Right ventricle myocardium inferior (tissue), 1 donor: ENCODE measurements at regions of chr7 and their contacts with region 1.

Region 1: GRCh38 chr7:30983042-30983913 is 19.5 kb downstream of the GHRHR start:
- DNase-seq: peak; percentile 91
- ATAC-seq: peak; percentile 80

Region 2: DNA sequence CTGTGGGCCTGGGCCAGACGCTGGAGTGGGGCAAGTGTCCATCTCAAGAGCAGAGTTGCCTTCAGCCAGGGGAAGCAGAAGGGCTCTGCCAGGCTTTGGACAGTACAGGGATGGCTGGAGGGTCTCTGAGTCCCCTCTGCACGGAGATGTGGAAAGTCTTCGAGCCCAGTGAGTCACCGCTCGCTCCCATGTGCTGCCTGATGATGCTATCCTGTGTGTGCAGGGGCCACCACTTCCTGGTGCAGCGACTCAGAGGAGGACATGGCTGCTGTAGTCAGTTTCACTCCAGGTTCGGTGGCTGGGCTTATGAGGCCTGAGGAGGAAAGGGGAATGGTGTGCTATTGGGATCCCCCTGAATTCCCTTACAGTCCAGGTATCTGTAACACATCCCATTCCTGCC is 74.8 kb after region 1 on chr7:
- intact Hi-C with region 1: loop called (anchors 5 kb)
- DNase-seq: peak; percentile 22
- ATAC-seq: no peak